ENCODE measurements at regions of chr3 and their contacts with region 1.

Region 1: DNA sequence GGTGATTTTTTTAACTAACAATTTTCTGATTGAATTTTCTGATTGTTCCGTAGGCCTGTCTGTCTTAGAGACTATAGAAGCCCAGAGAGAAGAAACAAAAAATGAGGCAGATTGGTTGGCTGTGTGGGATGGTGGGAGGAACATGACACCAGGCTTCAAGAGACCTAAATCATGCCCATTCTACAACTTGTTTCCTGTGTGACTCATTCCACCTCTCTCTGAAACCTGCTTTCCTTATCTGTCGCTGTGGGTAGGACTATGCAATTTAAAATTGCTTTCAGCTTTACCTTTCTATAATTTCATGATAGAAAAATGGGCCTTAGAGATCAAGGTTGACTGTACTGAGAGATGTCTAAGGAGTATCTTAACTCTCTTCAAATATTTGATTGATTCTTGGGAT is 44.5 kb downstream of the OXNAD1 start:
- DNase-seq: peak; percentile 59 to 88 (median 65)
- H3K4me3 ChIP-seq: no peak overlapping the region
- H3K4me3 Mint-ChIP-seq: peak overlapping the region; percentile 54 to 90 (median 80)
- H3K27ac ChIP-seq: peak overlapping the region; percentile 59
- H3K27ac Mint-ChIP-seq: peak overlapping the region; percentile 86 to 99 (median 89)
- H3K4me1 ChIP-seq: peaks cover 98% of the 10 kb centered on the region
- H3K4me1 Mint-ChIP-seq: peaks cover 79 to 95% (median 89%) of the 10 kb centered on the region in 4 donors
- H3K27me3 ChIP-seq: no peaks in the 10 kb centered on the region
- H3K27me3 Mint-ChIP-seq: no peaks in the 10 kb centered on the region

Region 2: GRCh38 chr3:16849229-16849628 is 539.7 kb after region 1 on chr3:
- CTCF ChIA-PET with region 1: no interaction called
- POLR2A ChIA-PET with region 1: interaction called, 4 read pairs
- intact Hi-C with region 1: loop called (anchors 10 kb)
- DNase-seq: peak; percentile 71 to 84 (median 77)
- H3K4me3 ChIP-seq: peak overlapping the region; percentile 8 to 16
- H3K4me3 Mint-ChIP-seq: peak overlapping the region; percentile 51 to 86 (median 78)
- H3K27ac ChIP-seq: peak overlapping the region; percentile 44
- H3K27ac Mint-ChIP-seq: peak overlapping the region; percentile 81 to 97 (median 90)
- H3K4me1 ChIP-seq: peaks cover 56% of the 10 kb centered on the region
- H3K4me1 Mint-ChIP-seq: peaks cover 40 to 61% (median 56%) of the 10 kb centered on the region in 4 donors
- H3K27me3 ChIP-seq: no peaks in the 10 kb centered on the region
- H3K27me3 Mint-ChIP-seq: no peaks in the 10 kb centered on the region

Region 3: DNA sequence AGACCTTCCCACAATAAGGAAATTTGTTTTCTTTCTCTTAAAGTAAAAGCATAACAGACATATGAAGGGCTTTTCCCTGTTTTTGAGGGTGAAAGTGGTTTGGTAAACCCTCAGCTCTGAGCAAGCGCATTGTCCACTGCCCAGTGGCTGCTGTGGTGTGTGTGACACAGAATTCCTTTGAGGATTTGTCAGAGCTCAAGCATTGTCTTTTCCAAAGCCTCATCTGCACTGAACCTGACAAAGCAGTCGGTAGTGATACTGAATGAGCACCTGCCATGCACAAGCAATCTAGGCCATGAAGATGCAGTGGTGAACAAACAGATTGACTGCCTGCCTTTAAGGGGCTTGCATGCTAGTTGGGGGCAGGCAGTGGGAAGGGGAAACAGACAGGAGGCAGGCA is 703.5 kb after region 1 on chr3:
- CTCF ChIA-PET with region 1: no interaction called
- POLR2A ChIA-PET with region 1: no interaction called
- intact Hi-C with region 1: no loop called
- DNase-seq: no peak
- H3K4me3 ChIP-seq: no peak overlapping the region
- H3K4me3 Mint-ChIP-seq: peak overlapping the region in 1 of 8 donors; percentile 5
- H3K27ac ChIP-seq: no peak overlapping the region
- H3K27ac Mint-ChIP-seq: peak overlapping the region in 3 of 7 donors; percentile 16 to 78 (median 38)
- H3K4me1 ChIP-seq: no peaks in the 10 kb centered on the region
- H3K4me1 Mint-ChIP-seq: peaks cover 29 to 54% (median 43%) of the 10 kb centered on the region in 4 donors
- H3K27me3 ChIP-seq: no peaks in the 10 kb centered on the region
- H3K27me3 Mint-ChIP-seq: no peaks in the 10 kb centered on the region

Measured in CD4-positive, alpha-beta memory T cell (primary cell).